Testis (tissue), 5 donors: ENCODE measurements at regions of chr17 and their contacts with region 1.

Region 1: DNA sequence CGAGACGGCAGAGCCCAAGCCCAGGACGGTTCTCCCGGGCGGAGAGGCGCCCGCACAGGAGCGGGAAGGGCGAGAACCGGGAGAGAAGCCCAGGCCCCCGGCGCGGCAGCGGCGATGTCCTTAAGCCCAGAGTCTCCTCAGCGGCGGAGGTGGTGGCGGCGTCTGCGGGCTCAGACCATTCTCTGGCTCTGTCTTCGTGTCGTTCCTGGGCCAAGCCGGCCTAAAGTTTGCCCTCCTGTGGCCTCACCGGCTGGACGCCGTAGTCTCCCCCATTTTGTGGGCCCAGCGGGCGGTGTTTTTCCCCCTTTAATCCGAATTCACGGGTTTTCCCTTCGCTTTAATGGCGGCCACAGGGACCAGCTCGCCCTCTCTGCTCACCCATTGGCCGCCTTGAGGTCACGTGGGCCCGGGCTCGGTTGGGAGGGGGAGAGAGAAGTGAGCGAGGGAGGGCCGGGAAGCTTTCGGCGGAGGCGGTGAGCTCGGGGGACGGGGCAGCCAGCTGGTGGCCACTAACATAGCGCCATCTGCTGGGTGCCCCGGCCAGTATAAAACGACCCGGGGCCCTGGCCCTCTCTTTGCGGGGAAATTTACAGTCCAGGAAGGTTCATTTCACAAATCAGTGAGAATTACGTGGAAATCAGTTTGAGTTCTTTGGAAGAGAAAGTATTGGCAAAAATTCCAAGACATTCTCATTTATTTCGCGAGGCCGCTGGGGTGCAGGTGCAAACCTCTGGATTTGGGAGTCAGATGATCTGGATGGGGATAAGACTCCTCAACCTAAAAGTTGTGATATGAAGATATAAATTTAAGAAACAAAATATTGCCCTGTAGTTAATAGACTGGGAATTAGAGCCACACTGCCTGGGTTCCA is 755 bp upstream of the MED13 start:
- DNase-seq: peak; percentile 99
- H3K4me3 ChIP-seq: peak overlapping the region; percentile 77 to 98
- H3K27ac ChIP-seq: peak overlapping the region; percentile 97 to 100
- H3K4me1 ChIP-seq: peaks cover 15% of the 10 kb centered on the region
- H3K27me3 ChIP-seq: no peaks in the 10 kb centered on the region
- CTCF ChIP-seq: peak; percentile 89 to 95 (median 93)
- POLR2A ChIP-seq: peak; percentile 66

Region 2: GRCh38 chr17:61875285-61875684 is 190.5 kb before region 1 on chr17:
- intact Hi-C with region 1: no loop called
- DNase-seq: no peak
- H3K4me3 ChIP-seq: no peak overlapping the region
- H3K27ac ChIP-seq: no peak overlapping the region
- H3K4me1 ChIP-seq: no peaks in the 10 kb centered on the region
- H3K27me3 ChIP-seq: no peaks in the 10 kb centered on the region
- CTCF ChIP-seq: no peak
- POLR2A ChIP-seq: no peak

Region 3: DNA sequence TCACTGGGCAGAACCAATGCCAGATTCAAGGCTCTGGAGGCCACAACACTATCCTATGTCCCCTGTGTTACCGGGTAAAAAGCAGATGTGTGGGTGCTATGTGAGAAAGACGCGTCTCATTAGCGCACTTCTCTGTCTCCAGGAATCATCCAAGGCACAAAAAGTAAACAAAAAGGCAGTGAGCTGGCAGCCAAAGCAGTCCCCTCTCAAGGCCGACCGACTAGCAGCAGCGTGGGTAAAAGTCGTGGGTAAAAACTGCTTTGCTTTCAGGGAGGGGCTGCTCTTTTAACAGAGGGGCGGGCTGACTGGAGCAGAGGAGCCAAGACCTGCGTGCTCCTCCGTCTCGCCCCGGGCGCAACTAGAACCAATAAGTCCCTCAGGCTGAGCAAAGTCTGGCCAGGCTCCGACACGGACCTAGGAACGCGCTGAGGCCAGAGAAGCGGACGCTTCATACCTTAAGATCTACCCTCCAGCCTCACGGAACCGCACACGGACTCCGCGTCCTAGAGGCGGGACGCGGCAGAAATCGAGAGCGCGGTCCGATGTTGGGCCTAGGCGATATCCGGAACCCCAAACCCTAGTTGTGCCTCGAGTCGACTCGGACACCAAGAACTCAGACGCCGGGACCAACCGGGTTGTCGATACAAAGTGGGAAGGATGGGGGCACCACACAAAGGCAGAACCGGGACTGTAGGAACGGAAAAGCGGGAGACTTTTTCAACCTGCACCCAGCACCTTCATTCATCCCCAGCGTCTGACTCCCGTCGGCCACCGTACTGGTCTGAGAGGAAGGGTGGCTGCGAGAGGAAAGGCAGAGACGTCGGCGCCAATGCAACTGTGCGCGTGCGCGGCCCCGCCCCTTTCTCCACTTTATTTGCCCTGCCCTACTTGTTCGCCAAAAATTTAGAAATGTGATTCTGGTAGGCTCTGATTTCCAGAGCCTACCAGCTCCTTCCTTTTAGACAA is 138.3 kb before region 1 on chr17 and contains the start of gene INTS2:
- intact Hi-C with region 1: loop called (anchors 10 kb)
- DNase-seq: peak; percentile 97
- H3K4me3 ChIP-seq: peak within 1 kb of the TSS; percentile 86 to 88
- H3K27ac ChIP-seq: peak within 1 kb of the TSS; percentile 85 to 91
- H3K4me1 ChIP-seq: peaks cover 4% of the 10 kb centered on the region
- H3K27me3 ChIP-seq: no peaks in the 10 kb centered on the region
- CTCF ChIP-seq: peak in 2 of 3 experiments; percentile 3 to 13
- POLR2A ChIP-seq: peak; percentile 49
- total RNA-seq, gene INTS2: 25.7 to 28.1 TPM

Region 4: DNA sequence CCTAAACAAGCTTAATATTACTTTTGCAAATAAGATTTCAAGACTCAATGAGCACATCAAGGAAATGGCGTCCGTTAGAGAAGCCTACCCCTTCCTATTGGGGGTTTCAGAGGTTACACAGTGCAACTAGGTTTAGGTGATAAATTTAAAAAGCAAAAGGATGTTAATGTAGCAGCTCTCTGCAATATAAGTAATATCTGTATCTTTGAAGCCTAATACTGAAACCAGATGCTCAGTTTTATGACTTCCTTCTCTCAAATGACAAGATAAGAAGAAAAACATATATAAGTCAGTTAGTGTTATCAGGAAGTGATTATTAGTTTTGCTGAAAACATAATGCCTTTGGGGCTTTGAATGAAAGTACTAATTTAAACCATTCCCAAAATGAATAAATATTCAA is 53.5 kb after region 1 on chr17:
- intact Hi-C with region 1: no loop called
- DNase-seq: no peak
- H3K4me3 ChIP-seq: no peak overlapping the region
- H3K27ac ChIP-seq: no peak overlapping the region
- H3K4me1 ChIP-seq: no peaks in the 10 kb centered on the region
- H3K27me3 ChIP-seq: no peaks in the 10 kb centered on the region
- CTCF ChIP-seq: no peak
- POLR2A ChIP-seq: no peak